ENCODE measurements at regions of chr17 and their contacts with region 1.

Region 1: GRCh38 chr17:49031965-49032928 is 35.1 kb downstream of the IGF2BP1 start:
- DNase-seq: peak; percentile 66
- ATAC-seq: peak; percentile 56
- H3K4me3 ChIP-seq: no peak overlapping the region
- H3K4me3 Mint-ChIP-seq: no peak overlapping the region
- H3K27ac ChIP-seq: no peak overlapping the region
- H3K27ac Mint-ChIP-seq: no peak overlapping the region
- H3K4me1 ChIP-seq: peaks cover 4% of the 10 kb centered on the region in 2 donors
- H3K4me1 Mint-ChIP-seq: peaks cover 2% of the 10 kb centered on the region
- H3K27me3 ChIP-seq: peaks cover 0 to 18% (median 4%) of the 10 kb centered on the region in 4 experiments
- H3K27me3 Mint-ChIP-seq: peaks cover 6% of the 10 kb centered on the region
- CTCF ChIP-seq: peak; percentile 83

Region 2: DNA sequence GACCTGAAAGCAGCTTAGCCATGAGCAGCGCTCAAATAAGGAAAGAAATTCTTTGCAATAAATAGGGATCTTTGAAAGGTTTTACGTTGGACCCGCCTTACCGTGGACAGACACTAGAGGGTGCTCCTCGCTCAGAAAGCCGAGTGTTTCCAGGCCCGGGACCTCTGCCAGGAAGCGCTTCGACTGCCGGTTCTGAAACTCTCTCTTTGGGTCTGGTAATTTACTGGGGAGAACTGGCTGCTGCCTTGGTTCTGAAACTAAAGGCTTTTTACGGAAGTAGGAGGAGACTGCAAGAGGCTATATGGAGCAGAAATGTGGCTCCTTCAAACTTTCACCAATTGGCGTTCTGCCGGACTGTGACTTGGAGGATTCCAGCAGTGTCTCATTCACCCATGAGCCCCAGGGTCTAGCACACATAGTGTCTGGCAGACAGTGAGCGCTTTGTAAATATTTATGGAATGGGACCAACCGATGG is 360.5 kb before region 1 on chr17:
- CTCF ChIA-PET with region 1: interaction called, 9 read pairs
- POLR2A ChIA-PET with region 1: no interaction called
- intact Hi-C with region 1: loop called (anchors 2 kb)
- DNase-seq: peak; percentile 72
- ATAC-seq: peak; percentile 64
- H3K4me3 ChIP-seq: no peak overlapping the region
- H3K4me3 Mint-ChIP-seq: peak overlapping the region; percentile 26
- H3K27ac ChIP-seq: no peak overlapping the region
- H3K27ac Mint-ChIP-seq: no peak overlapping the region
- H3K4me1 ChIP-seq: peaks cover 6 to 7% of the 10 kb centered on the region in 2 donors
- H3K4me1 Mint-ChIP-seq: peaks cover 3% of the 10 kb centered on the region
- H3K27me3 ChIP-seq: peaks cover 0 to 28% (median 16%) of the 10 kb centered on the region in 4 experiments
- H3K27me3 Mint-ChIP-seq: peaks cover 46% of the 10 kb centered on the region
- CTCF ChIP-seq: peak; percentile 87

Region 3: GRCh38 chr17:48678141-48678971 is 353.9 kb before region 1 on chr17:
- CTCF ChIA-PET with region 1: interaction called, 10 read pairs
- POLR2A ChIA-PET with region 1: no interaction called
- intact Hi-C with region 1: loop called (anchors 1 kb)
- DNase-seq: peak; percentile 78
- ATAC-seq: peak; percentile 81
- H3K4me3 ChIP-seq: no peak overlapping the region
- H3K4me3 Mint-ChIP-seq: no peak overlapping the region
- H3K27ac ChIP-seq: no peak overlapping the region
- H3K27ac Mint-ChIP-seq: no peak overlapping the region
- H3K4me1 ChIP-seq: peaks cover 0 to 9% of the 10 kb centered on the region in 2 donors
- H3K4me1 Mint-ChIP-seq: peaks cover 2% of the 10 kb centered on the region
- H3K27me3 ChIP-seq: peaks cover 0 to 41% (median 18%) of the 10 kb centered on the region in 4 experiments
- H3K27me3 Mint-ChIP-seq: peaks cover 49% of the 10 kb centered on the region
- CTCF ChIP-seq: peak; percentile 97

Region 4: GRCh38 chr17:48804925-48805411 is 227.3 kb before region 1 on chr17:
- CTCF ChIA-PET with region 1: interaction called, 16 read pairs
- POLR2A ChIA-PET with region 1: no interaction called
- intact Hi-C with region 1: no loop called
- DNase-seq: peak; percentile 72
- ATAC-seq: peak; percentile 93
- H3K4me3 ChIP-seq: no peak overlapping the region
- H3K4me3 Mint-ChIP-seq: no peak overlapping the region
- H3K27ac ChIP-seq: no peak overlapping the region
- H3K27ac Mint-ChIP-seq: no peak overlapping the region
- H3K4me1 ChIP-seq: peaks cover 2 to 3% of the 10 kb centered on the region in 2 donors
- H3K4me1 Mint-ChIP-seq: no peaks in the 10 kb centered on the region
- H3K27me3 ChIP-seq: peaks cover 0 to 9% (median 4%) of the 10 kb centered on the region in 4 experiments
- H3K27me3 Mint-ChIP-seq: peaks cover 14% of the 10 kb centered on the region
- CTCF ChIP-seq: peak; percentile 95

Region 5: GRCh38 chr17:48816774-48817590 is 215.3 kb before region 1 on chr17 and contains the start of gene TTLL6:
- CTCF ChIA-PET with region 1: interaction called, 25 read pairs
- POLR2A ChIA-PET with region 1: no interaction called
- intact Hi-C with region 1: loop called (anchors 2 kb)
- DNase-seq: peak; percentile 75
- ATAC-seq: peak; percentile 94
- H3K4me3 ChIP-seq: peak within 1 kb of the TSS; percentile 38 to 67 (median 48)
- H3K4me3 Mint-ChIP-seq: peak within 1 kb of the TSS; percentile 88
- H3K27ac ChIP-seq: no peak within 1 kb of the TSS
- H3K27ac Mint-ChIP-seq: peak within 1 kb of the TSS; percentile 60
- H3K4me1 ChIP-seq: peaks cover 14 to 17% of the 10 kb centered on the region in 2 donors
- H3K4me1 Mint-ChIP-seq: peaks cover 17% of the 10 kb centered on the region
- H3K27me3 ChIP-seq: peaks cover 0 to 51% (median 17%) of the 10 kb centered on the region in 4 experiments
- H3K27me3 Mint-ChIP-seq: peaks cover 39% of the 10 kb centered on the region
- CTCF ChIP-seq: no peak
- total RNA-seq, gene TTLL6: not detected in 2 replicates

Region 6: DNA sequence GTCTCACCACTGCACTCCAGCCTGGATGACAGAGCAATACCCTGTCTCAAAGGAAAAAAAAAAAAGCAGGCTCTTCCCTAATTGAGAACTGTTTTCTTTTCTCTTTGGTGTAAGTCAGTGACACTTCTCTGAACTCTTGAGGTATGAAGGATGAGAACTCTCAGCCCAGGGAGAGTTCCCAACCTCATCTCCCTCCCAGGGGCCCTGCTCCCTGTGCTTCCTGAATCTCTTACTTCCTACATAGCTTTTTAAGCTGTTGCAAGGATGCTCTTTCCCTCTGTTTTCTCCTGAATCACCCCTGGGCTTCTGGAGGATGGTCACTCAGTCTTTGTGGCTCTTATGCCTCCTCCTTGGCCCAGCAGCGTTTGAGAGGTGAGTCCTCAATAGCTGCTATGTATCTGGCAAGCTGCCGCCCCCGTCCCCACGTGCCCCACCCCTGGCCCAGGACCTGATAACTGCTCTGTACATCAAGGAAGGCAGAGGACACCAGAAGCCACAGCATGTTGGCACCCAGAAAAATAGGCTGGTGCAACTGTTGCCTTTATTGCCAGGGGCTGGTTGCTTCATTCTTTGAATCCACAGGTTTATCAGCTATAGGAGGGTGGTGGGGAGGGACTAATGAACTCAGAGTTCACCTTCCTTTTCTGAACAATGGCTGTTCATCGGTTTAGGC is 11.0 kb before region 1 on chr17:
- CTCF ChIA-PET with region 1: interaction called, 10 read pairs
- POLR2A ChIA-PET with region 1: no interaction called
- intact Hi-C with region 1: no loop called
- DNase-seq: no peak
- ATAC-seq: no peak
- H3K4me3 ChIP-seq: no peak overlapping the region
- H3K4me3 Mint-ChIP-seq: no peak overlapping the region
- H3K27ac ChIP-seq: no peak overlapping the region
- H3K27ac Mint-ChIP-seq: no peak overlapping the region
- H3K4me1 ChIP-seq: no peaks in the 10 kb centered on the region
- H3K4me1 Mint-ChIP-seq: no peaks in the 10 kb centered on the region
- H3K27me3 ChIP-seq: peaks cover 0 to 13% (median 3%) of the 10 kb centered on the region in 4 experiments
- H3K27me3 Mint-ChIP-seq: peaks cover 18% of the 10 kb centered on the region
- CTCF ChIP-seq: no peak

Region 7: GRCh38 chr17:49045376-49045775 is 13.1 kb after region 1 on chr17:
- CTCF ChIA-PET with region 1: interaction called, 15 read pairs
- POLR2A ChIA-PET with region 1: no interaction called
- intact Hi-C with region 1: no loop called
- DNase-seq: no peak
- ATAC-seq: no peak
- H3K4me3 ChIP-seq: no peak overlapping the region
- H3K4me3 Mint-ChIP-seq: no peak overlapping the region
- H3K27ac ChIP-seq: no peak overlapping the region
- H3K27ac Mint-ChIP-seq: no peak overlapping the region
- H3K4me1 ChIP-seq: no peaks in the 10 kb centered on the region
- H3K4me1 Mint-ChIP-seq: no peaks in the 10 kb centered on the region
- H3K27me3 ChIP-seq: peaks cover 0 to 9% (median 0%) of the 10 kb centered on the region in 4 experiments
- H3K27me3 Mint-ChIP-seq: peaks cover 14% of the 10 kb centered on the region
- CTCF ChIP-seq: no peak

Region 8: DNA sequence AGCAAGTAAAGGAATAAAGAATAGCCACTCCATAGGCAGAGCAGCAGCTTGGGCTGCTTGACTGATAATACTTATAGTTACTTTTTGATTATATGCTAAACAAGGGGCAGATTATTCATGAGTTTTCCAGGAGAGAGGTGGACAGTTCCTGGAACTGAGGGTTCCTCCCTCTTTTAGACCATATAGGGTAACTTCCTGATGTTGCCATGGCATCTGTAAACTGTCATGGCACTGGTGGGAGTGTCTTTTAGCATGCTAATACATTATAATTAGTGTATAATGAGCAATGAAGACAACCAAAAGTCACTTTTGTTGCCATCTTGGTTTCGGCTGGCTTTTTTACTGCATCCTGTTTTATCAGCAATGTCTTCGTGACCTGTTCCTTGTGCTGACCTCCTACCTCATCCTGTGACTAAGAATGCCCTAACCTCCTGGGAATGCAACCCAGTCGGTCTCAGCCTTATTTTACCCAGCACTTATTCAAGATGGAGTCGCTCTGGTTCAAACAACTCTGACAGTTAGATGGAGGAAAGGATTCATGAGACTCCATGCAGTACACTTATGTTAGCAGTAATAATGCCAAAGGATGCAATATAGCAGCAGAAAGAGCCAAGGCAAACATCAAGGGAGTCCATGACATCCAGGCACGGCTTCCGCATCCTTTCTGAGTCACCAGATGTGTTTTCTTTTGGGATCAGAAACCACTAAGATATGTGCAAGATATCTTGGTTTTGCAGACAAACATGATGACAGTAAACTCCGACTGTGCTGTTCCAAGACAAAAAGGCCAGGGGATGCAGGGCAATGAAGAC is 44.5 kb after region 1 on chr17:
- CTCF ChIA-PET with region 1: no interaction called
- POLR2A ChIA-PET with region 1: no interaction called
- intact Hi-C with region 1: no loop called
- DNase-seq: no peak
- ATAC-seq: no peak
- H3K4me3 ChIP-seq: no peak overlapping the region
- H3K4me3 Mint-ChIP-seq: no peak overlapping the region
- H3K27ac ChIP-seq: no peak overlapping the region
- H3K27ac Mint-ChIP-seq: no peak overlapping the region
- H3K4me1 ChIP-seq: no peaks in the 10 kb centered on the region
- H3K4me1 Mint-ChIP-seq: no peaks in the 10 kb centered on the region
- H3K27me3 ChIP-seq: peaks cover 0 to 25% (median 2%) of the 10 kb centered on the region in 4 experiments
- H3K27me3 Mint-ChIP-seq: peaks cover 51% of the 10 kb centered on the region
- CTCF ChIP-seq: no peak